ENCODE measurements at regions of chr1 and their contacts with region 1.

Region 1: GRCh38 chr1:160877221-160877620 is 7.8 kb downstream of the ITLN1 start:
- DNase-seq: peak; percentile 52
- ATAC-seq: peak; percentile 90
- H3K4me3 Mint-ChIP-seq: no peak overlapping the region
- H3K27ac Mint-ChIP-seq: peak overlapping the region; percentile 59
- H3K4me1 Mint-ChIP-seq: peaks cover 29% of the 10 kb centered on the region
- H3K27me3 Mint-ChIP-seq: peaks cover 2% of the 10 kb centered on the region

Region 2: DNA sequence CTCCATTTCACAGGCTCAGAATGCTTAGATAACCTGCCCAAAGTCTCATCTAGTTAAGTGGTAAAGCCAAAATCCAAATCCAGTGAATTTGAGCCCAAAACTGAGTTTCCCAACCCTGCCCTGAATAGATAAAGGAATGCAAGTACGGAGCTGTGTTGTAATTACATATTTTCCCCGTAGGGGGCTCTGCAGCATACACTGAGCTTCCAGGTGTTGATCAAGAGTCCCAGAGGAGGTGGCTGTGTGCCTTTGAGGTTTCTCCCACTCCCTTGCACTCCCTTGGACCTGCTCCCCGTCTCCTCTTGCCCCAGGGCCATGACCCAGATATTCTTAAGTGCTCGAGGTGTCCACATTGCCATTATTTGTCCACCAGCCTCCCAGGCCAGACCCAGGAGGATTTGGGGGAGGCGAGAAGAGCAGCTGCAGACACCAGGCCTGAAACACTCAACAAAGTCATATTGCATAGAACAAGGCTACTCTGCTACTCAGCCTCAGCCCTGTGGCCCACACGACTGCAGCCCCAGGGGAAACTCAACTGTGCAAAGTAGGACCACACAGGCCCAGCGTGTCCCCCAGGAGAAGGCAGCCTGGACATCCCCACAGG is 99.6 kb before region 1 on chr1:
- CTCF ChIA-PET with region 1: interaction called, 13 read pairs
- POLR2A ChIA-PET with region 1: no interaction called
- DNase-seq: peak; percentile 66
- ATAC-seq: peak; percentile 76
- H3K4me3 Mint-ChIP-seq: no peak overlapping the region
- H3K27ac Mint-ChIP-seq: peak overlapping the region; percentile 26
- H3K4me1 Mint-ChIP-seq: peaks cover 40% of the 10 kb centered on the region
- H3K27me3 Mint-ChIP-seq: no peaks in the 10 kb centered on the region

Region 3: DNA sequence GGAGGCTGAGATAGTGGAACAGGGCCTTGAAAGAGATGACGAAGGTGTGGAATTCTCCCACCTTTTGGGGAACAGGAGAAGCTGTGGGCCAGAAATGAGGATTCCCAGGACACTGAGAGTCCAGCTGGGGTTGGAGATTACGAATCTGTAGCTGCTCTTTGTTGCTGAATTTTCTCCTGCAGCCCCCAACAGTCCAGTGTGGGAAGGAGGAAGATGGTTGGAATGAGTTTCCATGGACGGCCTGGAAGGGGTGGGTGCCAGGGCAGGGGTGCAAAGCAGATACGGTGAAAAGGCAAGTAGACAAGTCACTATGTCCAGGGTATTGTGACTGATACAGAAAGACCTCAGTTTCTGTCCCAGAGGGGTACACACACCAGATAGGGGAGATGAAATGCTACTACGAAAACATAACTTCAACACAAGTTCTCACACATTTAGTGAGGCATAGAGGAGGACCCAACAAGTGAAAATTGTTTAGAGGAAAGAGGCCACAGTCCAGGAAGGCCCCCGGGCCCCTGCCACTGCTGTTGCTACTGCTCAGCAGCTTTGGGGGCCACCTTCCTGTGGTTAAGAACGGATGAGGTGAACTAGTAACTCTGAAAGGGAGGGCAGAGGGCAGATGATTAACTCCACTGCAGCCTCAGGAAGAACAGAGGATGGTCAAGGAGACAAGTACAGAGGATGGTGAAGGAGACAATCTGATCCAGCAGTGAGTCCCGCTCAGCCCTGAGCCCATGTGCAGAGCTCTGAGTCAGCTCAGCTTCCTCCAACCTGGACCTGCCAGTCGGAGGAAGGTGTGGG is 21.8 kb before region 1 on chr1:
- CTCF ChIA-PET with region 1: interaction called, 24 read pairs
- POLR2A ChIA-PET with region 1: no interaction called
- DNase-seq: peak; percentile 71
- ATAC-seq: peak; percentile 77
- H3K4me3 Mint-ChIP-seq: no peak overlapping the region
- H3K27ac Mint-ChIP-seq: no peak overlapping the region
- H3K4me1 Mint-ChIP-seq: peaks cover 27% of the 10 kb centered on the region
- H3K27me3 Mint-ChIP-seq: no peaks in the 10 kb centered on the region

Region 4: DNA sequence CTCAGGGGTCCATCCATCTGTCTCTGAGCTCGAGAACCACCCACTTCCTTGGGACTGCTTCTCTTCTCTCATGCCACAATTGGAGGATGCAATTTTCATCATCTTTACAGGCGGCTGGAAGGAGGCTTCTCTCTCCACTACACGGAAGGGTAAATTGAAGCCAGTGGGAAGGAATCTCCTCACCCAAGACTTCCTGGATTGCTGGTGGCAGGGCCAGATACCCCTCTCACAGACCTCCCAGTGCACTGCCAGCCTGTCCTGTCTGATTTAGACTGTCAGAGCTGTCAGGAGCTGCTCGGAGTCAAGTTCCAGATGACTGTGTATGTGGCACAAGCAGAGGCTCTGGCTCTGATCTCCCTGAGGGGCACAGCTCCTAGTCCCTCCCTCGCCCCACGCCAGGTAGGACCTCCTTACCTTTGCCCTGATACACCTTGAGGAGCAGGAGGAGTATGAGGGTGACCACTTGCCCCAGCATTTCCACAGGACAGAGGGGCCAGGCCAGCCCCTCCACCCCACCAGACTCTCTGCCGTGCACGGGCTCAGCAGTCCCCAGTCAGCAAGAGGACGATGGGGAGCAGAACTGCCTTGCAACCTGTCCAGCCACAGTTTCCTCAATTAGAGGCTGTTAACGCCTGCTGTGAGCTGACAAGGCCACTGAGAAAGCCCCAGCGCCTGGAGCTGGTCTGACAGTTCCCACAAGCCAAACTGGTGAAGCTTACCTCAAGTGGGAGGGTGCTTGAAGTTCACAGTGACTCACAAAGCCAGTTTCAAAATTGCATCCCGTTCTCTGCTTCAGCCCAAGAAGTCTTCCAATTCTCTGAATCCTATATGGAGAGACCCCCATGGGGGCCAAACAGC is 14.8 kb before region 1 on chr1 and contains the start of gene CD244:
- CTCF ChIA-PET with region 1: interaction called, 24 read pairs
- POLR2A ChIA-PET with region 1: interaction called, 6 read pairs
- DNase-seq: peak; percentile 82
- ATAC-seq: peak; percentile 90
- H3K4me3 Mint-ChIP-seq: peak within 1 kb of the TSS; percentile 78
- H3K27ac Mint-ChIP-seq: peak within 1 kb of the TSS; percentile 90
- H3K4me1 Mint-ChIP-seq: peaks cover 56% of the 10 kb centered on the region
- H3K27me3 Mint-ChIP-seq: no peaks in the 10 kb centered on the region
- total RNA-seq, gene CD244: 15.0 to 15.5 TPM